ENCODE measurements at regions of chr20 and their contacts with region 1.

Region 1: GRCh38 chr20:1325173-1326030 is 3.5 kb downstream of the SDCBP2 start:
- DNase-seq: peak; percentile 88 to 96
- H3K4me3 ChIP-seq: peak overlapping the region; percentile 87
- H3K27ac ChIP-seq: peak overlapping the region; percentile 95
- H3K4me1 ChIP-seq: peaks cover 49% of the 10 kb centered on the region
- H3K27me3 ChIP-seq: no peaks in the 10 kb centered on the region
- CTCF ChIP-seq: no peak; the same call in 1 of the 2 replicates

Region 2: DNA sequence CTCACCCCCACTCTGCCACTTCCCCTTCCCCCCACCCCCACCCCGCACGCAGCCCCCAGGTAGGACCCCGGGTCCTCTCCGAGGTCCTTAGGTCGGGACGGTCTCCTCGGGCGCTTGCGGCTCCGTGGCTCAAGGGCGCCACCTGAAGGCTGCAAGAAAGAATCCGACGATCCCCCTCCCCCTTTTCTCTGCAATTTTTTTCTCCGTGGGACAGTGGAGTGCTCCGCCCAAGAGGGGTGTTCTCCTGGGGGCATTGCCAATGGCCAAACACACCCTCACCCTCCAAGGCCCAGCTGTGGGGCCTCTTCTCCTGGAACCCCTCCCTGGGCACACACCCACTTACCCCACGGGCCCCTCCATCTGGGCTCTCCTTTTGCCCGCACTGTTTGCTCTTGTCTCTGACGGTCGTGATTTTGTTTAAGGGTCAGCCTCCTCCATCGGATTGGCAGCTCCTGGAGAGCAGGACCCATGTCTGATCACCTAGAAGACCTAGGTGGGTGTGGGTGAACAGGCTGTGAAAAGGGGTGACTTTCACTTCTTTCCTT is 139.5 kb before region 1 on chr20:
- CTCF ChIA-PET with region 1: no interaction called
- POLR2A ChIA-PET with region 1: no interaction called
- intact Hi-C with region 1: no loop called
- DNase-seq: peak in 1 of 2 experiments; percentile 56
- H3K4me3 ChIP-seq: 0 out of 2 replicates have a peak overlapping the region, but pooled peaks have one; percentile 11
- H3K27ac ChIP-seq: no peak overlapping the region
- H3K4me1 ChIP-seq: no peaks in the 10 kb centered on the region
- H3K27me3 ChIP-seq: peaks cover 29% of the 10 kb centered on the region
- CTCF ChIP-seq: peak; percentile 69

Region 3: GRCh38 chr20:1375515-1375914 is 50.1 kb after region 1 on chr20:
- CTCF ChIA-PET with region 1: interaction called, 3 read pairs
- POLR2A ChIA-PET with region 1: no interaction called
- intact Hi-C with region 1: loop called (anchors 5 kb)
- DNase-seq: no peak
- H3K4me3 ChIP-seq: no peak overlapping the region
- H3K27ac ChIP-seq: no peak overlapping the region
- H3K4me1 ChIP-seq: peaks cover 31% of the 10 kb centered on the region
- H3K27me3 ChIP-seq: no peaks in the 10 kb centered on the region
- CTCF ChIP-seq: no peak

Region 4: GRCh38 chr20:1401451-1401907 is 76.1 kb after region 1 on chr20:
- CTCF ChIA-PET with region 1: no interaction called
- POLR2A ChIA-PET with region 1: interaction called, 4 read pairs
- intact Hi-C with region 1: loop called (anchors 2 kb)
- DNase-seq: peak in 1 of 2 experiments; percentile 56
- H3K4me3 ChIP-seq: no peak overlapping the region
- H3K27ac ChIP-seq: peak overlapping the region; percentile 89
- H3K4me1 ChIP-seq: peaks cover 51% of the 10 kb centered on the region
- H3K27me3 ChIP-seq: no peaks in the 10 kb centered on the region
- CTCF ChIP-seq: no peak

Region 5: GRCh38 chr20:1437235-1437904 is 112.0 kb after region 1 on chr20:
- CTCF ChIA-PET with region 1: interaction called, 3 read pairs
- POLR2A ChIA-PET with region 1: no interaction called
- intact Hi-C with region 1: loop called (anchors 5 kb)
- DNase-seq: peak; percentile 71 to 75
- H3K4me3 ChIP-seq: no peak overlapping the region
- H3K27ac ChIP-seq: no peak overlapping the region
- H3K4me1 ChIP-seq: 0 out of 2 replicates have a peak, but pooled peaks cover 8% of the 10 kb centered on the region
- H3K27me3 ChIP-seq: no peaks in the 10 kb centered on the region
- CTCF ChIP-seq: peak; percentile 94

Region 6: DNA sequence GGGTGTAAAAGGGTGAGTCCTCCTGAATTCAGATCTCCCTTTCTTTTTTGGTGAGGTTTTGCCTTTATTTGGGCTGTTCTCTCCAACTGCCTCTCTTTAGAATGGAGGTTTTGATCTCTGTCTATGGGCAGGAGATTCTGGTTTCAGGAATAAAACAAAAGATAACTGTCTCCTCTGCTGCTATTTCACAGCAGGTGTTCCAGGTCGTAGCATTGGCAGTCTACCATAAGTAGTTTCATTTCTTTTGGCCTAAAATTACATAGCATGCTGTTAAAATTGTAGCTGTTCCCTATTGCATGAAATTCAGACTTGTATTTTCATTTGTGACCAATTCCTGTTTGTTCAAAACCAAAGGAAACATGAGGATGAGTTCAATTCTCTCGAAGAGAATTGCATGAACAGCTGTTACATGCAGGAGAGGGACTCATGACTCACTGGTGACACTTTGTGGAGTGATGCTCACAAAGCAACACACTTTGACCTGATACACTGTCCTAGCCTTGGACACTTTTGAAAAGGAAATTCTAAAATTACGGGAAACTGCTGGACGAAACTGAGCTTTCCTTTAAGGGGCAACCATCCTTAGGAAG is 409.0 kb after region 1 on chr20:
- CTCF ChIA-PET with region 1: no interaction called
- POLR2A ChIA-PET with region 1: no interaction called
- intact Hi-C with region 1: loop called (anchors 5 kb)
- DNase-seq: no peak
- H3K4me3 ChIP-seq: no peak overlapping the region
- H3K27ac ChIP-seq: peak overlapping the region; percentile 91
- H3K4me1 ChIP-seq: peaks cover 50% of the 10 kb centered on the region
- H3K27me3 ChIP-seq: no peaks in the 10 kb centered on the region
- CTCF ChIP-seq: no peak

Measured in PC-9 (cell line).